Heart right ventricle (tissue), 16 donors: ENCODE measurements at regions of chr10 and their contacts with region 1.

Region 1: GRCh38 chr10:72375585-72375984 is 20.9 kb upstream of the DNAJB12 start:
- DNase-seq: no peak
- ATAC-seq: no peak
- H3K4me3 ChIP-seq: no peak overlapping the region
- H3K27ac ChIP-seq: no peak overlapping the region
- H3K4me1 ChIP-seq: no peaks in the 10 kb centered on the region
- H3K27me3 ChIP-seq: no peaks in the 10 kb centered on the region
- CTCF ChIP-seq: peak in 1 of 9 donors; percentile 14

Region 2: GRCh38 chr10:72126184-72126871 is 249.3 kb before region 1 on chr10:
- intact Hi-C with region 1: no loop called
- DNase-seq: no peak
- ATAC-seq: peak in 3 of 8 donors; percentile 22 to 41 (median 32)
- H3K4me3 ChIP-seq: no peak overlapping the region
- H3K27ac ChIP-seq: peak overlapping the region in 1 of 10 donors; percentile 1
- H3K4me1 ChIP-seq: peaks cover 0 to 25% (median 6%) of the 10 kb centered on the region in 9 donors
- H3K27me3 ChIP-seq: no peaks in the 10 kb centered on the region
- CTCF ChIP-seq: peak; percentile 7 to 57 (median 38)

Region 3: DNA sequence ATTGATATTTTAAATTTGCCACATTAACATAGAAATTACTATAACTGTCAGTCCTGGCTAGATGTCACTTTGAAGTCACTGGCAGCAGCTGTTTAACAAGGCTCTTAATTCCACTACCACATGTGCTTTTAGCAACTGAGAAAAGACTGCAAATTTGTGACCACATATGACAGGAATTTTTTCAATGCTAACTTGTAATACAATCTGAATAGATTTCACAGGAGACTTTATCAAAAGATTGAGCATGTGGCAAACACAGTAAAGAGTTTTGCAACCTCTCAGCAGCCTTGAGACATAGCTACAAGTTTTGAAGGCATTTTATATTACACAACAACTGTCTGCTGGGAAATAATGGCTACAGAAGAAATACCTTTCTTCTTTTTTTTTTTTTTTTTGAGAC is 177.3 kb after region 1 on chr10:
- intact Hi-C with region 1: loop called in 1 of 10 experiments (anchors 10 kb)
- DNase-seq: no peak
- ATAC-seq: peak in 1 of 8 donors; percentile 50
- H3K4me3 ChIP-seq: no peak overlapping the region
- H3K27ac ChIP-seq: no peak overlapping the region
- H3K4me1 ChIP-seq: peaks cover 0 to 6% (median 0%) of the 10 kb centered on the region in 9 donors
- H3K27me3 ChIP-seq: no peaks in the 10 kb centered on the region
- CTCF ChIP-seq: no peak

Region 4: DNA sequence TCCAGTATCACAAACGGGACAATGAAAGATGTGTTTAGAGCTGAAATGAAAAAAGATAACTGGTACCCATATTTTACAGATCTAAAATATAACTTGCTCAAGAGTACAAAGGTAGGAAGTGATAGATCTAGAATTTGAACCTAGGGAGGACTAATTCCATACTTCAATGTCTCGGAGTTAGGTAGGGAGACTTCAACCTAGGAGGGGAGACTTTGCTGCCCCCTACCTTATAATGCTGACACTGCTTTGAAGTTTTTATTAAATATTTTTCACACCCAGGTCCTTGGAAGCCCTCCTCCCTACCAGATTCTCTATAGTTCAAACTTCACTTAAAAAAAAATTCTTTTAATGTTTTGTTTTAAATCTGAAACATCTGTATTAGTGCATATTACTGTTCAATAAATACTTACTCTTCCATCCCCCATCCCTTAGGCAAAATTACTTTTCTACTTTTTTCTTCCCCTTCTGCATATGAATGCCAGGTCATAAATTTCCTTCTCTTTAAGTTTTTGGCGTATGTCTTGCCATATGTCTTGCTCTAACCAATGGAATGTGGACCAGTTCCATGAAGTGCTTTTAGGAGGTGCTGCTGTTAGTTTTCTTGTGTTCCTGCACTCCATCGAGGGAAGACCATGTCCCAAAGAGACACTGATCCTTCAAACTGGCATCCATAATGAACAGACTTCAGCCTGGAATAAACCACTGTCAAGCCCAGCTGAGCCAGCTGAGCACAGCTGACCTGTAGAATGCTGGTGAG is 192.5 kb after region 1 on chr10:
- intact Hi-C with region 1: loop called in 1 of 10 experiments (anchors 5 kb)
- DNase-seq: no peak
- ATAC-seq: no peak
- H3K4me3 ChIP-seq: no peak overlapping the region
- H3K27ac ChIP-seq: peak overlapping the region in 4 of 10 donors; percentile 6 to 41 (median 16)
- H3K4me1 ChIP-seq: peaks cover 0 to 24% (median 0%) of the 10 kb centered on the region in 9 donors
- H3K27me3 ChIP-seq: no peaks in the 10 kb centered on the region
- CTCF ChIP-seq: peak in 6 of 9 donors; percentile 31 to 48 (median 41)